Natural killer cell (primary cell): ENCODE measurements at regions of chr16 and their contacts with region 1.

Region 1: GRCh38 chr16:83956336-83957289 is 3.6 kb downstream of the OSGIN1 start:
- DNase-seq: peak; percentile 67 to 77
- ATAC-seq: peak; percentile 46 to 74 (median 71)
- H3K4me3 ChIP-seq: no peak overlapping the region
- H3K4me3 Mint-ChIP-seq: no peak overlapping the region
- H3K27ac ChIP-seq: no peak overlapping the region
- H3K27ac Mint-ChIP-seq: no peak overlapping the region
- H3K4me1 ChIP-seq: peaks cover 18% of the 10 kb centered on the region
- H3K4me1 Mint-ChIP-seq: peaks cover 0 to 15% of the 10 kb centered on the region in 2 donors
- H3K27me3 ChIP-seq: peaks cover 7% of the 10 kb centered on the region
- H3K27me3 Mint-ChIP-seq: peaks cover 0 to 12% of the 10 kb centered on the region in 2 donors
- CTCF ChIP-seq: peak; percentile 81

Region 2: GRCh38 chr16:83762141-83762991 is 194.2 kb before region 1 on chr16:
- intact Hi-C with region 1: no loop called
- DNase-seq: no peak
- ATAC-seq: no peak
- H3K4me3 ChIP-seq: no peak overlapping the region
- H3K4me3 Mint-ChIP-seq: no peak overlapping the region
- H3K27ac ChIP-seq: no peak overlapping the region
- H3K27ac Mint-ChIP-seq: no peak overlapping the region
- H3K4me1 ChIP-seq: no peaks in the 10 kb centered on the region
- H3K4me1 Mint-ChIP-seq: no peaks in the 10 kb centered on the region
- H3K27me3 ChIP-seq: no peaks in the 10 kb centered on the region
- H3K27me3 Mint-ChIP-seq: peaks cover 4 to 19% of the 10 kb centered on the region in 2 donors
- CTCF ChIP-seq: no peak

Region 3: DNA sequence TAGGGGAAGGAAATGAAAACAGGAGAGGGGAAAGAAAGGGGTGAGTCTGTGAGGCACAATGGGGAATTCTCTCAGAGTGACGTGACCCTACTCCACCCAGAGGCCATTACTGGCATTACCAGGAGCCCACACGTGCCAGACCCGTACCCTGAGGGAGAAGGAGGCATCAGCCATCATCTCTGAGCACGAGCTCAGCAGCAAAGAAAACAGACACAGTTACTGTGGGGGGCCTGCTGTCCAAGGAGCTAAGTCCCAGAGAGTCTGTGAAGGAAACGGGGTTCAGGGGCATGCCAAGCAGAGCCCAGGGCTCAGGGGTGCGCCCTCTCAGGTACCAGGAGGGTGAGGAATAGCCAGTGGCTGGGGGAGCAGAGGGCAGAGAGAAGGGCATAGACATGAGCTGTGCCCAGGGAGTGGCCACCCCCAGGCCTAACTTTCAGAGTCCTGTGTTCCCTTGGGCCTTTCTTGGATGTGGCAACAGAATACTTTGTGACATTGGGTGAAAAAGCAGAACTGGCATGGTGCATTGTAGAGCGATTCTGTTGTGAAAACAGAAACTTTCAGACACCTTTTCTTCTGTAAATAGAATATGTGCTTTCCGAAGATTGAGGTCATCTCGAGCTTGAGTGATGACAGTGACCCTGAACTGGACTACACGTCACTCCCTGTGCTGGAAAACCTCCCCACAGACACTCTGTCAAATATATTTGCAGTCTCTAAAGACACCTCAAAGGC is 218.9 kb after region 1 on chr16:
- intact Hi-C with region 1: loop called (anchors 1 kb)
- DNase-seq: peak; percentile 39 to 71
- ATAC-seq: peak; percentile 83 to 98 (median 87)
- H3K4me3 ChIP-seq: no peak overlapping the region
- H3K4me3 Mint-ChIP-seq: no peak overlapping the region
- H3K27ac ChIP-seq: no peak overlapping the region
- H3K27ac Mint-ChIP-seq: peak overlapping the region in 1 of 2 donors; percentile 5
- H3K4me1 ChIP-seq: peaks cover 8% of the 10 kb centered on the region
- H3K4me1 Mint-ChIP-seq: peaks cover 0 to 7% of the 10 kb centered on the region in 2 donors
- H3K27me3 ChIP-seq: no peaks in the 10 kb centered on the region
- H3K27me3 Mint-ChIP-seq: no peaks in the 10 kb centered on the region
- CTCF ChIP-seq: peak; percentile 68

Region 4: DNA sequence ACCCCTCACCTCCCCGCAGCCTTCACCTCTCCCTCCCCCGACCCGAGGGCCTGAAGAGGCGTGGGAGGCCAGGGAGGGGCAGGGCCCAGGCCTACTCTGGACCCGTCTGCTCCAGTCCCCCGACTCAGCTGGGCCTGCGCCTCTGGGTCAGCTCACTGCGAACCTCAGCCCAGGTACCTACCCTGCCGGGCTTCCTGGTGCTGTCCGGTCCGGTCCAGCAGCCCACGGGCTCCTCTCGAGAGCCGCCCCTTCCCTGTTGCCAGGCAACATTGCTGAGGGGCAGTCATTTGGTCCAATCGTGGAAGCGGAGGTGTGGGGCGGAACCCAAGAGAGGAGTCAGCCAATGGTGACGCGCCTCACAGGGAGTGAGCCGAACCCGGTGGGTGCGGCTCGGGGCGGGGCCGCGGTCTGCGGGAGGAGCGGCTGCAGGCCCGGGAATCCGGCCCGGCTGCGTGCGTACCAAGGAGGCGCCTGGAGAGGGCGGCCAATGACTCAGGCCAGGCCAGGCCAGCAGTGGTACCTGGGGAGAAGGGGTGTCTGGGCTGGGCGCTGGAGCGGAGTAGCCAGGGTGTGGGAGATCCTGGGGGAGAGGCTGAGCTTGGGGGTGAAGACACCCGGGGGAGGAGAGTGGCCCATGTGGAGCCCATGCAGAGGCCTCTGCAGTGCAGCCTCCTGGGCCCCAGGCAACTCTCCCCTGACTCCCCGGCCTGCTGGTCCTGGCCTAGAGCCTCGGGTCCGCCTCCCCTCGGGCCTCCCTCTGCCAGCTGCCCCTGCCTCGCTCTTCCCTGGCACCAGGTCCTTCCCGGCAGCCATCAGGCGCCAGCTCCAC is 548.0 kb after region 1 on chr16 and contains the start of gene MEAK7:
- intact Hi-C with region 1: loop called (anchors 5 kb)
- DNase-seq: peak; percentile 96 to 98
- ATAC-seq: peak; percentile 96 to 97 (median 96)
- H3K4me3 ChIP-seq: peak within 1 kb of the TSS; percentile 80
- H3K4me3 Mint-ChIP-seq: peak within 1 kb of the TSS; percentile 91
- H3K27ac ChIP-seq: peak within 1 kb of the TSS; percentile 50
- H3K27ac Mint-ChIP-seq: peak within 1 kb of the TSS; percentile 65 to 80
- H3K4me1 ChIP-seq: peaks cover 43% of the 10 kb centered on the region
- H3K4me1 Mint-ChIP-seq: peaks cover 5 to 30% of the 10 kb centered on the region in 2 donors
- H3K27me3 ChIP-seq: no peaks in the 10 kb centered on the region
- H3K27me3 Mint-ChIP-seq: peaks cover 0 to 8% of the 10 kb centered on the region in 2 donors
- CTCF ChIP-seq: no peak
- total RNA-seq, gene MEAK7: 4.8 to 8.5 (median 4.8) TPM